Naive thymus-derived CD4-positive, alpha-beta T cell (primary cell): ENCODE measurements at regions of chr12 and their contacts with region 1.

Region 1: GRCh38 chr12:92363295-92364146 is 217.9 kb upstream of the BTG1 start:
- DNase-seq: peak in 8 of 9 donors; percentile 23 to 75 (median 62)
- ATAC-seq: peak; percentile 65
- H3K4me3 ChIP-seq: peak overlapping the region; percentile 49
- H3K4me3 Mint-ChIP-seq: peak overlapping the region; percentile 68 to 90 (median 80)
- H3K27ac ChIP-seq: peak overlapping the region; percentile 69
- H3K27ac Mint-ChIP-seq: peak overlapping the region; percentile 92 to 99 (median 97)
- H3K4me1 ChIP-seq: peaks cover 35 to 67% of the 10 kb centered on the region in 2 donors
- H3K4me1 Mint-ChIP-seq: peaks cover 33 to 88% (median 76%) of the 10 kb centered on the region in 7 donors
- H3K27me3 ChIP-seq: no peaks in the 10 kb centered on the region
- H3K27me3 Mint-ChIP-seq: no peaks in the 10 kb centered on the region

Region 2: DNA sequence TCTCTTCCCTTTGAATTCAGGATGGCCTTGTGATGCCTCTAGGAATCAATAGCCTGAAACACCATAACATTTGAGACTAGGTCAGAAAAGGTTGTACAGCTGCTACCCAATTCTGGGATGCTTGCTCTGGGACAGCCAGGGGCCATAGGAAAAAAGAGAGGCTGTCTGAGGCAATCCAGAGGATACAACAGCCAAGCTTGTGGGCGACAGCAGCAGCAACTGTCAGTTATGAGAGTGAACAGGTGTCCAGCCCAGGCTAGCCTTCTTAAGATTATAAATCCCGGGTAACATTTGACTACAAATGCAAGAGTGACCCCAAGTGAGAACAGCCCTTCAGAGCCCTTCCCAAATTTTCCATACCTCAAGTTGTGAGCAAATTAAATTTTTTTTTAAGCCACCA is 1192.0 kb before region 1 on chr12:
- CTCF ChIA-PET with region 1: no interaction called
- POLR2A ChIA-PET with region 1: no interaction called
- intact Hi-C with region 1: no loop called
- DNase-seq: no peak
- ATAC-seq: no peak
- H3K4me3 ChIP-seq: no peak overlapping the region
- H3K4me3 Mint-ChIP-seq: no peak overlapping the region
- H3K27ac ChIP-seq: no peak overlapping the region
- H3K27ac Mint-ChIP-seq: no peak overlapping the region
- H3K4me1 ChIP-seq: no peaks in the 10 kb centered on the region
- H3K4me1 Mint-ChIP-seq: peaks cover 0 to 2% (median 0%) of the 10 kb centered on the region in 7 donors
- H3K27me3 ChIP-seq: no peaks in the 10 kb centered on the region
- H3K27me3 Mint-ChIP-seq: peaks cover 0 to 16% (median 7%) of the 10 kb centered on the region in 5 donors

Region 3: DNA sequence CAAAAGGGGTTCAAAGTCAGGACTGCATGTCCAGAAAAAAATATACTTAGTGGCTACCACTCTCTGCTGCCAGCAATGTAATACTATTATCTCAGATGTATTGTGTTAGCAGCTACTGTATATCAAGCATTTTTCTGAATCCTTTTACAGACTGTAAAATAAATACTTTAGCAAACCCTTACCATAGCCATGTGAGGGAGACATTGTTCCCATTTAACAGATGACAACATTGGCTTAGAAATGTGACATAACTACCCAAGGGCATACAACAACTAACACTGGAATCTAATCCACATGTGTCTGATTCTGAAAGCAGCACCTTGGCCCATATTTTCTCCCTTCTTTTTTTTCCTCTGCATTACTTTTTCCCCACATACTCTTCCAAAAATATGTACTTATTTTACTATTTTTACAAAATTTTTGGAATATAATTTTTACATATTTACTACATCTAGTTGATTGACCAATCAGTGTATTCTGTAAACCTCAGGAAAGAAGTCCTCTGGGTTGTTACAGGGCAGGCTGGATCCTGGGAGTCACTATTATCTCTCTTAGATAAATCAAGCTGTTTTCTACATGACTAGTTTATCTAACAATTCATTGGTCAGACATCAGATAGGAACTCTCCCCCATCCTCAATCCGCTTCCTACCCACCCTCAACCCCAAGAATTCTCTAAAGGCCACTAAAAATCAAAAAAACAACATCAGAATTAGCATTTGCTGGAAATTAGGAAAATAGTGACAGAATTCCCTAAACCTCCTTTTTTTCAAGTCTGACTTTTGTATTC is 371.9 kb before region 1 on chr12:
- CTCF ChIA-PET with region 1: no interaction called
- POLR2A ChIA-PET with region 1: no interaction called
- intact Hi-C with region 1: loop called in 1 of 2 experiments (anchors 5 kb)
- DNase-seq: peak in 5 of 9 donors; percentile 22 to 64 (median 48)
- ATAC-seq: peak; percentile 83
- H3K4me3 ChIP-seq: no peak overlapping the region
- H3K4me3 Mint-ChIP-seq: peak overlapping the region in 5 of 10 donors; percentile 18 to 50 (median 32)
- H3K27ac ChIP-seq: peak overlapping the region; percentile 26
- H3K27ac Mint-ChIP-seq: peak overlapping the region in 7 of 9 donors; percentile 8 to 92 (median 70)
- H3K4me1 ChIP-seq: peaks cover 9 to 27% of the 10 kb centered on the region in 2 donors
- H3K4me1 Mint-ChIP-seq: peaks cover 9 to 92% (median 79%) of the 10 kb centered on the region in 7 donors
- H3K27me3 ChIP-seq: no peaks in the 10 kb centered on the region
- H3K27me3 Mint-ChIP-seq: no peaks in the 10 kb centered on the region

Region 4: GRCh38 chr12:92278378-92278828 is 85.1 kb before region 1 on chr12:
- CTCF ChIA-PET with region 1: no interaction called
- POLR2A ChIA-PET with region 1: no interaction called
- intact Hi-C with region 1: no loop called
- DNase-seq: no peak
- ATAC-seq: no peak
- H3K4me3 ChIP-seq: no peak overlapping the region
- H3K4me3 Mint-ChIP-seq: no peak overlapping the region
- H3K27ac ChIP-seq: no peak overlapping the region
- H3K27ac Mint-ChIP-seq: peak overlapping the region in 1 of 9 donors; percentile 8
- H3K4me1 ChIP-seq: no peaks in the 10 kb centered on the region
- H3K4me1 Mint-ChIP-seq: peaks cover 8 to 26% (median 22%) of the 10 kb centered on the region in 7 donors
- H3K27me3 ChIP-seq: no peaks in the 10 kb centered on the region
- H3K27me3 Mint-ChIP-seq: no peaks in the 10 kb centered on the region

Region 5: DNA sequence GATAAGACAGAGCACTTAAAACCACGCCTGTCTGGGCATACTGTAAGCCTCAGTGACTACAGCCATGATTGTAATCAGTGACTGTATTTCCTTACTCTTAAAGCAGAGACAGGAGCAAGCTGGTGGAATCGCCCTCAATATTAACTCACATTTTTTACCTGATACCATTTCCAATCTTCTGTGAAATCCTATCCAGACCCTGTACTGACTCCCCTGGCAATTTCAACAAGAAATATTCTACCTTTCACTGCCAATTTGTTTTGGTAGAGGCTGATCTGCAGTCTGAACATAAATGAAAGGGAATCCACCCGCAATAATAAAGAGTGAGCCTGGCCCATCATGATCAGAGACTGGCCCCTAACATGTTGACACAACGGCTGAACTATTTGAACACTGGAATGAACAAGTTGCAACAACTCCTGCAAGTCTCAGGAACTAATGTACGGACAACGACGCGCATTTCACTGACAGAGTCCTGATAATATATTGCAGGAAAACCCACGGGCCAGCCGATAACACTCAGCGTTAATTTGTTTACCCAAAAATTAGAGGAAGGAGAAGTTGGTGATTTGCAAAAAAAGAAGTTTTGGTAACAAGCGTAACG is 22.4 kb before region 1 on chr12:
- CTCF ChIA-PET with region 1: no interaction called
- POLR2A ChIA-PET with region 1: interaction called, 4 read pairs
- intact Hi-C with region 1: loop called in 1 of 2 experiments (anchors 2 kb)
- DNase-seq: peak in 3 of 9 donors; percentile 23 to 32 (median 28)
- ATAC-seq: peak; percentile 79
- H3K4me3 ChIP-seq: peak overlapping the region; percentile 5
- H3K4me3 Mint-ChIP-seq: peak overlapping the region; percentile 14 to 79 (median 69)
- H3K27ac ChIP-seq: peak overlapping the region; percentile 51
- H3K27ac Mint-ChIP-seq: peak overlapping the region; percentile 35 to 90 (median 83)
- H3K4me1 ChIP-seq: peaks cover 0 to 11% of the 10 kb centered on the region in 2 donors
- H3K4me1 Mint-ChIP-seq: peaks cover 2 to 38% (median 20%) of the 10 kb centered on the region in 7 donors
- H3K27me3 ChIP-seq: no peaks in the 10 kb centered on the region
- H3K27me3 Mint-ChIP-seq: no peaks in the 10 kb centered on the region

Region 6: GRCh38 chr12:92378682-92379479 is 15.4 kb after region 1 on chr12:
- CTCF ChIA-PET with region 1: interaction called, 9 read pairs
- POLR2A ChIA-PET with region 1: interaction called, 36 read pairs
- intact Hi-C with region 1: loop called (anchors 1 to 2 kb)
- DNase-seq: peak in 7 of 9 donors; percentile 44 to 73 (median 65)
- ATAC-seq: peak; percentile 90
- H3K4me3 ChIP-seq: no peak overlapping the region
- H3K4me3 Mint-ChIP-seq: peak overlapping the region; percentile 8 to 74 (median 62)
- H3K27ac ChIP-seq: peak overlapping the region; percentile 64
- H3K27ac Mint-ChIP-seq: peak overlapping the region; percentile 87 to 96 (median 93)
- H3K4me1 ChIP-seq: peaks cover 8 to 52% of the 10 kb centered on the region in 2 donors
- H3K4me1 Mint-ChIP-seq: peaks cover 31 to 91% (median 87%) of the 10 kb centered on the region in 7 donors
- H3K27me3 ChIP-seq: no peaks in the 10 kb centered on the region
- H3K27me3 Mint-ChIP-seq: no peaks in the 10 kb centered on the region

Region 7: DNA sequence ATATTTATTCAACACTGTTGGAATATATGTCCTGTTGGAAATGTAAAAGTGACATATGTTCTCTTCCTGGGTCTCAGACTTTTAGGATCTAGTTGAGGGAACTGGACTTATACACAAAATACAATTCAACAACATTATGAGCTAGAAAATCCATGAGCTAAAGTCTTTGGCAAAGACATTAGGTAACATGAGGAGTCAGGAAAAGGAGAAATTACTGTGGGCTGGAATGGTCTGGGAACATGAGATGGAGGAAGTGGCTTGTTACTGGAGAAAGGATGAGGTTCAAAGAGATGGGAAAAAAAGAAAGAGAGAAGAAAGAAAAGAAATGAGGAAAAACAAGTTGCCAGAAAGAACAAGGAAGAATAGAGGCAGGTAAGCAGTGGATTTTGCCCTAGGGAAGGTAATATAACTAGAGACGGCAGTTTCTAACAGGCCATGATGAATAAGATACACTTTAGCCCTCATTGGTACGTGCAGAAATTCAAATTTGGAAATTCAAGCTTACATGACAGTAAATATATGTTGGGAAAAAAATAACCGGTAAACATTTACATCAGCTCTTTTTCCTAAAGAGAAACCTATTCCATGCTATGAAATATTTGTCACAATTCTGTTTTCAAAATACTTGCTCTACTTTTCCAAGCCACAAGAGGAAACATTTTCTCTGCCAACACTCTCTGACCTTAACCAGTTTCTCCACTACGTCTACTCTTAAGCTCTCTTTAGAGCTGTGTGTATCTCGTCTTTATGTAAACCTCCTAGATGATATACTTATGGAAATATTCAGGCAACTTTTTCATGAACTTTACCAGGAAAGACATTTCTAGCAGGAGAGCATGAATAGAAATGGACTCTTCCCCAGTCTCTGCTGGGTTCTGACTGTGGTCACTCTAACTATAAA is 50.9 kb after region 1 on chr12:
- CTCF ChIA-PET with region 1: no interaction called
- POLR2A ChIA-PET with region 1: no interaction called
- intact Hi-C with region 1: no loop called
- DNase-seq: no peak
- ATAC-seq: no peak
- H3K4me3 ChIP-seq: no peak overlapping the region
- H3K4me3 Mint-ChIP-seq: no peak overlapping the region
- H3K27ac ChIP-seq: no peak overlapping the region
- H3K27ac Mint-ChIP-seq: no peak overlapping the region
- H3K4me1 ChIP-seq: no peaks in the 10 kb centered on the region
- H3K4me1 Mint-ChIP-seq: peaks cover 12 to 44% (median 28%) of the 10 kb centered on the region in 7 donors
- H3K27me3 ChIP-seq: no peaks in the 10 kb centered on the region
- H3K27me3 Mint-ChIP-seq: no peaks in the 10 kb centered on the region

Region 8: DNA sequence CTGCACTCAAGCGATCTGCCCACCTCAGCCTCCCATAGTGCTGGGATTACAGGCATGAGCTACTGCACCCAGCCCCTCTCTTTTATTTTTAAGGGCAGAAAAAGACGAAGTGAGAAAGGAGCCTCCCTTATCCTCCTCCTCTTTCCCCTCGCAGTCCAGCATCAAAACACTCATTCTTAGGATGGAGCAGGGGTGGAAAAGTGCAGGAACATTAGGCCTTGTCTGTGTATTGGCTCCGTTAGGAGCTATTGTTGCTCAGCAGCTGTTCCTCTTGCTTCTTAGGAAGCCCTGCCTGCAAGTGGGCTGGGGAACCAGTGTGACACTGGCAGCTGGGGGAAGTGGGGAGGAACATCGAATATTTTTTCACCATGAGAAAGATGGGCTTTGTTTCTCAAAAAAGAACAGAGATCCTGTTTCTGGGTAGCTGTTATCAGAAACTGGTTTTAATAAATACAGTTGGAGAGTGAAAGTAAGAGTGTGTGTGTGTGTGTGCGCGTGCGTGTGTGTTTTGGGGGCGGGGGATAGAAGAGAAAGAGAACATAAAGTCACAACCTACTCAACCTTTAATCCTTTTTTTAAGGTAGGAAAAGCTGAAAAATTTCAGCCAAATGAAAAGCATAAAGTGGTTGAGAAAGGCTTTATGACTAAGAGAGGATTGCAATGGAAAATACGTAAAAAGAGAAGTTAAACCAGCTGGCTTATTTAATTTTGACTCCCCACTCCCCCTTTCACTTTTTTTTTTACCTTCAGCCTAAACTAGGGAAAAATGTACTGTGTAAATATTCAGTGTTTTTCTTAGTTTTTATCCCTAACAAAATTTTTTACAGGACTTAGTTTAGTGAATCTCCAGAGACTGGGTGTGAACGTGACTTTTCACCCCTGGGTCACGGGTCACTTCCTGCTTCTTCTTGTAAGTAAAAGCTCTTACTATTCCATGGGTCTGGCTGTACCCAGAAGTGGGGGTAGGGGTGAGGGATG is 142.0 kb after region 1 on chr12:
- CTCF ChIA-PET with region 1: interaction called, 5 read pairs
- POLR2A ChIA-PET with region 1: interaction called, 3 read pairs
- intact Hi-C with region 1: loop called in 1 of 2 experiments (anchors 5 kb)
- DNase-seq: peak; percentile 11 to 71 (median 50)
- ATAC-seq: peak; percentile 66
- H3K4me3 ChIP-seq: peak overlapping the region; percentile 48
- H3K4me3 Mint-ChIP-seq: peak overlapping the region; percentile 80 to 93 (median 87)
- H3K27ac ChIP-seq: peak overlapping the region; percentile 73
- H3K27ac Mint-ChIP-seq: peak overlapping the region; percentile 89 to 99 (median 96)
- H3K4me1 ChIP-seq: peaks cover 17 to 28% of the 10 kb centered on the region in 2 donors
- H3K4me1 Mint-ChIP-seq: peaks cover 15 to 48% (median 30%) of the 10 kb centered on the region in 7 donors
- H3K27me3 ChIP-seq: no peaks in the 10 kb centered on the region
- H3K27me3 Mint-ChIP-seq: no peaks in the 10 kb centered on the region

Region 9: DNA sequence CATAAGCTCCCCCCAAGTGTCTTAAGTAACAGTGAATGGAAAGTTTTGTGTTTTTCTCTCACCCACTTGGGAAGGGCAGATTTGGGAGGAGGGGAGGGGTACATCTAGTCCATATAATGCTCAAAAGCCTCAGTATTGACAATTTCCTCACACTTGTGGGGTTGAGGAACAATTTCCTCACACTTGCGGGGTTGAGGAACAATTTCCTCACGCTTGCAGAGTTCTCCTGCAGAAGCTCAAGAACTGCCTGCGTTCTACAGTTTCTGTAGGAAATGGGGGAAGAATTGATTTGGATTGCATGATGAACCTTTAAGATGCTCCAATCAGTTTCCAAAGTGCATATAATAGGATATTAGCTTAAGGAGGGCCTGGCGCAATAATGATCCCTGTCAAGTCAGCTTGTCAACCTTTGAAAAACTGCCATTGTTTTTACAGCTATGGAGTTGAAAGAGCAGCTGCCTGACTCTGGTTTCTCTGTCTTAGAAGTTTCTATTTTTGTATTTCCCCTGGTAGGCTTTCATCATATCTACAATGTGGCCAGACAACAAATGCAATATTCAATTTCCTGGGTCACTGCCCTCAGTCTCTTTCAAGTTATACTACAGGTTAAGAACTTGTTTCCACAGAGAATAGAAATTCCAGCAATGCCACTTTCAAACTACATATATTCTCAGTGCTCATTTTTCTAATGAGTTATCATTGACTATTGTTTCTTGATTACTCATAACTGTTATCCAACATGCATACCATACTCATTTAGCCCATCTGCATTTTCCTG is 405.8 kb after region 1 on chr12:
- CTCF ChIA-PET with region 1: no interaction called
- POLR2A ChIA-PET with region 1: no interaction called
- intact Hi-C with region 1: no loop called
- DNase-seq: peak in 4 of 9 donors; percentile 3 to 13 (median 6)
- ATAC-seq: peak; percentile 36
- H3K4me3 ChIP-seq: no peak overlapping the region
- H3K4me3 Mint-ChIP-seq: peak overlapping the region in 8 of 10 donors; percentile 1 to 61 (median 36)
- H3K27ac ChIP-seq: no peak overlapping the region
- H3K27ac Mint-ChIP-seq: peak overlapping the region in 6 of 9 donors; percentile 2 to 72 (median 20)
- H3K4me1 ChIP-seq: peaks cover 0 to 11% of the 10 kb centered on the region in 2 donors
- H3K4me1 Mint-ChIP-seq: peaks cover 14 to 49% (median 34%) of the 10 kb centered on the region in 7 donors
- H3K27me3 ChIP-seq: no peaks in the 10 kb centered on the region
- H3K27me3 Mint-ChIP-seq: no peaks in the 10 kb centered on the region